ENCODE measurements at regions of chr12 and their contacts with region 1.

Region 1: DNA sequence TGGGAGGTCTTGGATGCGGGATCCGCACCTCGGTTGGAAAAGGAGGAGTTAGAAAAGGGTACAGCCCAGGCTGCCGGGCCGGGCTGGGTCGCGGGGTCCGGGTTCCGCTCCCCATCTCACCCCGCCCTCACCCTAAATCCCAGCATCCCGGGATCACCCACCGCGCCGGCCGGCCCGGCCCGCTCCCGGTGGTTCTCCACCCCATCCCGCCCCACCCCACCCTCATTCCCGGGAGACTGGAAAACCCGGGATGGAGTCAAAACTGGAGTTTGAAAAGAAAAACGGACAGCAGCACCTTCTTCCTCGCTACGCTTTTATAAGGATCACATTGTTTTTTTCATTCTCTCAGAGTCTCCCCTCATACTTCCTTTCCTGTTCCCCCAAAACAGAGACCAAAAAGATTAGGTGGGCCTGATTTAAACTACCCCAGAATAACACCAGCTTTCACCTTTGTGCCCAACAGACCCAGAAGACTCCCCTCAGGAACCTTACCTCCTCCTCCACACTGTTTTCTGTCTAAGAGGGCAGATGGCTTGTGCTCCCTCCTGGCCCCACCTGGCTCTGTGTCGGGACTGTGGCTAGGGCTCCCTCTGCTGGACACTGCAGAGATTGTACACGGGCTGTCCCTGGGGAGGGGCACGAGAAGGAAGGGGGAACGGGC is 2.8 kb downstream of the GLI1 start:
- DNase-seq: peak; percentile 95
- H3K4me3 Mint-ChIP-seq: peak overlapping the region; percentile 79
- H3K27ac Mint-ChIP-seq: peak overlapping the region; percentile 19
- H3K4me1 Mint-ChIP-seq: peaks cover 47% of the 10 kb centered on the region
- H3K27me3 Mint-ChIP-seq: peaks cover 9% of the 10 kb centered on the region

Region 2: DNA sequence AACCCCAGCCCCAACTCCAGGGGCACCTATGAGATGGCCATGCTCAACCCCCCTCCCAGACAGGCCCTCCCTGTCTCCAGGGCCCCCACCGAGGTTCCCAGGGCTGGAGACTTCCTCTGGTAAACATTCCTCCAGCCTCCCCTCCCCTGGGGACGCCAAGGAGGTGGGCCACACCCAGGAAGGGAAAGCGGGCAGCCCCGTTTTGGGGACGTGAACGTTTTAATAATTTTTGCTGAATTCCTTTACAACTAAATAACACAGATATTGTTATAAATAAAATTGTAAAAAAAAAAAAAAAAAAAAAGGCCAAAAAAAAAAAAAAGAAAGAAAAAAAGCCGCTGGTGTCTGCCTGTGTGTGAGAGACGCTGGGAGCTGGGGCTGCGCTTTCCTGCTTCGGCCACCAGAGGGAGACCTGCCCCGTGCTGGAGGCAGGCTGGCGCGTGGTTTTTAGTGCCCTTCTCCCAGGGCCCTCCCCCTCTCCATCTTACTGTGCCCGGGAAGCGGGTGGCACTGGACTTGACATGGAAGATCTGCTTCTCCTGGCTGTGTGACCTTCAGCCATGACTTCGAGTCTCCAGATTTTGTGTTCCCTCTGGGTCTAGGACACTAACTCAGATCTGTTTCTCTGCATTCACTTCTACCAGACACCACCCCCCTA is 249.2 kb before region 1 on chr12:
- CTCF ChIA-PET with region 1: interaction called, 16 read pairs
- intact Hi-C with region 1: loop called (anchors 1 kb)
- DNase-seq: peak; percentile 92
- H3K4me3 Mint-ChIP-seq: no peak overlapping the region
- H3K27ac Mint-ChIP-seq: no peak overlapping the region
- H3K4me1 Mint-ChIP-seq: peaks cover 28% of the 10 kb centered on the region
- H3K27me3 Mint-ChIP-seq: peaks cover 39% of the 10 kb centered on the region

Region 3: GRCh38 chr12:57280211-57281062 is 181.9 kb before region 1 on chr12:
- CTCF ChIA-PET with region 1: interaction called, 9 read pairs
- intact Hi-C with region 1: loop called (anchors 1 kb)
- DNase-seq: peak; percentile 90
- H3K4me3 Mint-ChIP-seq: peak overlapping the region; percentile 46
- H3K27ac Mint-ChIP-seq: peak overlapping the region; percentile 90
- H3K4me1 Mint-ChIP-seq: peaks cover 28% of the 10 kb centered on the region
- H3K27me3 Mint-ChIP-seq: no peaks in the 10 kb centered on the region

Region 4: DNA sequence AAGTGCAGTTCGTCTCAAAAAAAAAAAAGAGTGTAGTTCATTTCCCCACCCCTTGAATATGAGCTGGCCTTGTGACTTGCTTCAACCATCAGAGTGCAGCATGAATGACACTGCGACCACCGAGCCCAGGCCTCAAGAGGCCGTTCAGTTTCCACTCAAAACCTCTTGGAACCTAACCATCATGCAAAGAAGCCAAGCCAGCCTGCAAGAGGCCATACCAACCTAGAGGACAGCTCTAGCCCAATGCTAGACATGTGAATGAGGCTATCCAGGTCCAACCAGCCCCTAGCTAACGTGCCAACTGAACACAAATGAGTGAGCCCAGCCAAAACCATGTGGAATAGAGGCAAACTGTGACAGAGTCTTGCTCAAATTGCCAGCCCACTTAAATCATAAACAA is 61.2 kb before region 1 on chr12:
- CTCF ChIA-PET with region 1: no interaction called
- intact Hi-C with region 1: no loop called
- DNase-seq: no peak
- H3K4me3 Mint-ChIP-seq: no peak overlapping the region
- H3K27ac Mint-ChIP-seq: no peak overlapping the region
- H3K4me1 Mint-ChIP-seq: peaks cover 21% of the 10 kb centered on the region
- H3K27me3 Mint-ChIP-seq: no peaks in the 10 kb centered on the region

Region 5: GRCh38 chr12:57444744-57445143 is 17.6 kb before region 1 on chr12:
- CTCF ChIA-PET with region 1: interaction called, 34 read pairs
- intact Hi-C with region 1: no loop called
- DNase-seq: no peak
- H3K4me3 Mint-ChIP-seq: no peak overlapping the region
- H3K27ac Mint-ChIP-seq: no peak overlapping the region
- H3K4me1 Mint-ChIP-seq: no peaks in the 10 kb centered on the region
- H3K27me3 Mint-ChIP-seq: peaks cover 4% of the 10 kb centered on the region

Region 6: DNA sequence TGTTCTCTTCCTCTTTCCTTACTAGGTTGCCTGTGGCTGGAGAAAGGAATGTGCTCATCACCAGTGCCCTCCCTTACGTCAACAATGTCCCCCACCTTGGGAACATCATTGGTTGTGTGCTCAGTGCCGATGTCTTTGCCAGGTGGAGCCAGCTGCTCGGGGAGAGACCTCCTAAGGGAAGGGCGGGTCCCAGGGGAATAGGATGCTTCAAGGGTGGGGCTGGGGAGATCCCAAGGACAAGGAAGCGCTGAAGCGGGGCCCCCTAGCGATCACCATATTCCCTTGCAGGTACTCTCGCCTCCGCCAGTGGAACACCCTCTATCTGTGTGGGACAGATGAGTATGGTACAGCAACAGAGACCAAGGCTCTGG is 35.7 kb after region 1 on chr12:
- CTCF ChIA-PET with region 1: no interaction called
- intact Hi-C with region 1: no loop called
- DNase-seq: no peak
- H3K4me3 Mint-ChIP-seq: no peak overlapping the region
- H3K27ac Mint-ChIP-seq: no peak overlapping the region
- H3K4me1 Mint-ChIP-seq: peaks cover 7% of the 10 kb centered on the region
- H3K27me3 Mint-ChIP-seq: no peaks in the 10 kb centered on the region

Region 7: DNA sequence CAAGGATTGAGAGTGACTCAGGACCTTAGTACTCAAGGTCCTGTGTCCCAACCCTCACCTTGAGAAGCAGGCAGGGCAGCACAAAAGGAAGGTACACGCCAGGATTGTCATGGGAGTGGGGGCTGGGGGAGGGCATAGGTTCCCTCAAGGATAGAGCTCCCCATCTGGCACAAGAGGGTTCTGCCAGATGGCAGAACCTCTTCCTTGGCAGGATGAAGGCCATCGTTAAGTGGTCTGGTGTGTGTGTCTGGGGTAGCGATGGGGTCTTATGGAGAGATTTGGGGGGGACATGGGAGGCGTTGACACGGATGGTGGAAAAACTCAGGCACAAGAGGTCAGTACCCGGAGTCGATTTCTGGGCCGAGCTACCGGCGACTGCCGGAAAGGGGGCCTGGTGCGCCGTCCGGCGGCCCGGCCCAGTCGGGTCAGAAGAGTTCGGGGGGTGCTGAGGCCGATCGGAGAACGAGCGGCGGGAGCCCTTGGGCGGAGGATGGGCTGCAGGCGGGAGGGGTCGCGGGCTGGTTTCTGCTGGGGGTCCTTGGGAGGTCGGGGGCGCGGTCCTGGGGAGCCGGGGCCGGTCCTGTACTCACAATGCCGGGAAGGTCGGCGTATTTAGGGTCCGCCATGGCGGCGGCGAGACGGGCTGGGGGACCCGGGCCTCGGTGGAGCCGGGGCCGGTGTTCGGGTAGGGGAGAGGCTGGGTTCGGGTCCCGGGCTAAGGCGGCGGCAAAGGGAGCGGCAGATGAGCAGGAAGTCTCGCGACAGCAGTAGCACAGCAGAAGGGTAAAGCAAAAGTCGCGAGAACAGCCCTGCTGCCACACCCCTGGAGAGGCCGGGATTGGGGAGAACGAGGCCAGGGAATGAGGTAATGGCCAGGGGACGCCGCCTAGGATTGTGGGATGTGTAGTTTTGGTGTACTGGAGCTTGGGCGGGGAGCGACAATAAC is 84.3 kb after region 1 on chr12 and contains the start of gene DCTN2:
- CTCF ChIA-PET with region 1: interaction called, 6 read pairs
- intact Hi-C with region 1: loop called (anchors 1 kb)
- DNase-seq: peak; percentile 98
- H3K4me3 Mint-ChIP-seq: peak within 1 kb of the TSS; percentile 91
- H3K27ac Mint-ChIP-seq: peak within 1 kb of the TSS; percentile 82
- H3K4me1 Mint-ChIP-seq: peaks cover 47% of the 10 kb centered on the region
- H3K27me3 Mint-ChIP-seq: no peaks in the 10 kb centered on the region
- total RNA-seq, gene DCTN2: 65.1 to 71.7 TPM

Region 8: GRCh38 chr12:57674691-57675090 is 212.3 kb after region 1 on chr12:
- CTCF ChIA-PET with region 1: no interaction called
- intact Hi-C with region 1: no loop called
- DNase-seq: no peak
- H3K4me3 Mint-ChIP-seq: no peak overlapping the region
- H3K27ac Mint-ChIP-seq: no peak overlapping the region
- H3K4me1 Mint-ChIP-seq: no peaks in the 10 kb centered on the region
- H3K27me3 Mint-ChIP-seq: peaks cover 2% of the 10 kb centered on the region

Region 9: GRCh38 chr12:57693659-57694458 is 231.5 kb after region 1 on chr12 and contains the start of gene OS9:
- CTCF ChIA-PET with region 1: no interaction called
- intact Hi-C with region 1: loop called (anchors 1 kb)
- DNase-seq: peak; percentile 99
- H3K4me3 Mint-ChIP-seq: no peak within 1 kb of the TSS
- H3K27ac Mint-ChIP-seq: no peak within 1 kb of the TSS
- H3K4me1 Mint-ChIP-seq: peaks cover 3% of the 10 kb centered on the region
- H3K27me3 Mint-ChIP-seq: no peaks in the 10 kb centered on the region
- total RNA-seq, gene OS9: 60.7 to 60.9 TPM